Breast epithelium (tissue), 4 donors: ENCODE measurements at regions of chr4 and their contacts with region 1.

Region 1: DNA sequence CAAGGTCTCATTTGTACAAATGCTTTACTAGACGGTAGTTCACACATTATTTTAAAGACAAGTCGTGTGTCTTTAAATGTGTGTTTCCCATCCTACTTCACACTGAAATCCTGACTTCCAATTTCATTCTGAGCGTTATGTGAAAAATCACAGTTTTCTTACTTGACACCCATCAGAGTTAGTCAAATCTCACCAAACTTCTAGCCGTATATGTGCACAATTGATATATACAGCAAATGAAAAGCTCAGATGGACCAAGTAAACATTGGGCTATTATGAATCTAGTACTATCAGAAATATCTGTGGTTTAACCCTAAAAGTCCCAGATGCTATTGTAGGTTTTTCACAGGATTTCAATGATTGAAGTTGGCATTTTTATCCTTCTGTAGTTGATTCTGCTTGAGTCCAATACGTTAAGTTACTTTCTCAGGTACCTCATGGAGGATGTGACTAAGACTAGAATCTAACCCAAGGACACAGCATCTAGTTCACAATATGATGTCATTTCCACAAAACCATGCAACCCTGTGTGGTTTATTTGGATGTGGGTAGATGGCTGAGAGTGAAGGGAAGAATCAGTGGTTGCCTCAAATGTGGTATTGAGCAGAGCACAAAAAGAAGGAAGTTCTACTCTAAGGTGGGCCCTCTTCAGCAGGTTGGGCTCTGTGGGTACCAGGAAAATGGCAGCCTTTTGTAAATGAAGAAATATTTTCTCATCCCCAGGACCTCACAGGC is 22.1 kb upstream of the TRIM60 start:
- DNase-seq: no peak
- H3K4me3 ChIP-seq: no peak overlapping the region
- H3K27ac ChIP-seq: no peak overlapping the region
- H3K4me1 ChIP-seq: no peaks in the 10 kb centered on the region
- H3K27me3 ChIP-seq: no peaks in the 10 kb centered on the region
- CTCF ChIP-seq: no peak
- POLR2A ChIP-seq: no peak

Region 2: DNA sequence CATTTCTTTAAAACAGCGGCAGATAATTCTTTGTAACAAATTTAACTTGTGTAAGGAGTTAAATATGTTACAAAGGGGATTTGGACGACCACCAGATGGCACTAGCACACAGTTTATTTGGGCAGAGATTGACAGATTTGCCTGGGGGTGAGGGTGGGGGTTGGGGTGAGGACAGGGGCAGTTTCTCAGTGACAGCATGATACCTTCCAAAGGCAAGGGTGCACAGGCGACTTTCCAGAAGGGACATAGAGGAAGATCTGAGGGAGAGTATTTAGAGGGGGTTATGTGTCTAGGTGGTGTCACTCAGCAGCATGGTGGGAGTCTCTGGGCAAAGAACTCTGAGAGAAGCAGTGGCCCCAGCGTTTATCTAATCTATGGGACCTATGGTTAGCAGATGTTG is 1524.8 kb before region 1 on chr4:
- intact Hi-C with region 1: loop called (anchors 5 kb)
- DNase-seq: no peak
- H3K4me3 ChIP-seq: no peak overlapping the region
- H3K27ac ChIP-seq: no peak overlapping the region
- H3K4me1 ChIP-seq: no peaks in the 10 kb centered on the region
- H3K27me3 ChIP-seq: no peaks in the 10 kb centered on the region
- CTCF ChIP-seq: peak in 1 of 3 donors; percentile 15
- POLR2A ChIP-seq: no peak

Region 3: DNA sequence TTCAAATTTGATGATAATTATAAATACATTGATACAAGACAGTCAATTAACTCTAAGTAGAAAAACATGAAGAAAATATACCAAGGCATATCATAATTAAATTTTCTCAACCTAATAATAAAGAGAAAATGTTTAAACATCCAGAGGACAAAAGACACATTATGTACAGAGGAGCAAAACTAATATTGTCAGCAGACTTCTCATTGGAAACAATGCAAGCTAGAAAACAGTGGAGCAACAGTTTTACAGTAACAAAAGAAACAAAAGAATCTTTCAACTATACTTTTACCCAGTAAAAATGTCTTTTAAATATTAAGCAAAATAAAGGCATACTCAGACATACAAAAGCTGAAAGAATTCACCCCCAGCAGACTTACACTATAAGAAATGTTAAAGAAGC is 1277.2 kb before region 1 on chr4:
- intact Hi-C with region 1: no loop called
- DNase-seq: no peak
- H3K4me3 ChIP-seq: no peak overlapping the region
- H3K27ac ChIP-seq: no peak overlapping the region
- H3K4me1 ChIP-seq: no peaks in the 10 kb centered on the region
- H3K27me3 ChIP-seq: no peaks in the 10 kb centered on the region
- CTCF ChIP-seq: no peak
- POLR2A ChIP-seq: no peak

Region 4: DNA sequence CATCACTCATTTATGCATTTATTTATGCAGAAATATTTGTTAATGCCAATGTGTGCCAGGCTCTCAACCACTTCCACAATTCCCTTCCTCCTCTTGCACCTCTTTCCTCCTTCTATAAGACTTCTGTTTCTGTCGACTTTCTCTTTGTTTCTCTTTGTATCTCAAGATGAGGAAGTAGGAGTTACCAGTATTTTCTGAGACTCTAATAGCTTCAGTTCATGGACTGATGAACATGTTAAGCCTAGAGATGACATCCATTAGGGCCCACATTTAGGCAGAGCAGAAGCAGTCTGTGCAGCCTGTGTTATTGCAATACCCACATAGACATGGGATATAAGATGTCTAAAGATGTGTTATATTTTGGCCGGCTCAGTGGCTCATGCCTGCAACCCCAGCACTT is 497.5 kb before region 1 on chr4:
- intact Hi-C with region 1: no loop called
- DNase-seq: no peak
- H3K4me3 ChIP-seq: no peak overlapping the region
- H3K27ac ChIP-seq: no peak overlapping the region
- H3K4me1 ChIP-seq: no peaks in the 10 kb centered on the region
- H3K27me3 ChIP-seq: no peaks in the 10 kb centered on the region
- CTCF ChIP-seq: no peak
- POLR2A ChIP-seq: no peak

Region 5: DNA sequence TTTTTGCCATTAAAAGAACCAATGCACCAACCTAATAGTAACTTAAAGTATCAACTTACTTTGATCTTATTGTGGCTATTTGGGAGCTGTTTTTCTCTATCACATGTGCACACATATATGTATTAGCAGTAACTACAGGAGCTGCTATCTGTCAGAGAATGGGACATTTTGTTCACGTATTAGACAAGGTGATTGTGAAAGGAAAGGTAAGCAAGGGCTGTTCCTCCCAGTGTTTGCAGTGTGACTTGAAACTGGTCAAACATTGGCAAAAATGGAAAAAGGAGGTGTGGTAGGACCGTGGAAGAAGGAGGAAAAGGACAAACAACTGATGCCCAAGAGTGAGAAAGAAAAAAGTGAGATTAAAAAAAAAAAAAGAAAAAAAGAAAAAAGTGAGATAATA is 154.6 kb after region 1 on chr4:
- intact Hi-C with region 1: no loop called
- DNase-seq: no peak
- H3K4me3 ChIP-seq: no peak overlapping the region
- H3K27ac ChIP-seq: no peak overlapping the region
- H3K4me1 ChIP-seq: no peaks in the 10 kb centered on the region
- H3K27me3 ChIP-seq: no peaks in the 10 kb centered on the region
- CTCF ChIP-seq: no peak
- POLR2A ChIP-seq: no peak